ENCODE measurements at regions of chr21 and their contacts with region 1.

Region 1: DNA sequence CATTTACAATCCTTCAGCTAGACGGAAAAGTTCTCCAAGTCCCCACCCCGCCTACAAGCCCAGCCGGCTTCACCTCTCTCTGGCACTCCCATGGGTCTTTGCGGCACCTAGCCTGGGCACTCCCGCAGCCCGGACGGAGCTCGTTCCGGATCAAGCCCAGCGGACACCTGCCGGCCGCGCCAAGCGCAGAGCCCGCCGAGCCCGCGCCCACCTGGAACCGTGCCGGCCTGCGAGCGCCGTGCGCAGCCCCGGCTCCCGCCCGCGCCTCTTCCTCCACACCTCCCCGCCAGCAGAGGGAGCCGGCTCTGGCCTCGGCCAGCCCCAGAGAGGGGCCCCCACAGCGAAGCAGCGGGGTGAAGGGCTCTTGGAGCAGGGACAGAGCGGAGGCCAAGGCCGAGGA is 50.0 kb upstream of the KRTAP19-8 start:
- DNase-seq: no peak
- ATAC-seq: no peak

Region 2: GRCh38 chr21:30044445-30045064 is 1043.8 kb before region 1 on chr21:
- intact Hi-C with region 1: loop called (anchors 10 kb)
- DNase-seq: no peak
- ATAC-seq: no peak

Region 3: DNA sequence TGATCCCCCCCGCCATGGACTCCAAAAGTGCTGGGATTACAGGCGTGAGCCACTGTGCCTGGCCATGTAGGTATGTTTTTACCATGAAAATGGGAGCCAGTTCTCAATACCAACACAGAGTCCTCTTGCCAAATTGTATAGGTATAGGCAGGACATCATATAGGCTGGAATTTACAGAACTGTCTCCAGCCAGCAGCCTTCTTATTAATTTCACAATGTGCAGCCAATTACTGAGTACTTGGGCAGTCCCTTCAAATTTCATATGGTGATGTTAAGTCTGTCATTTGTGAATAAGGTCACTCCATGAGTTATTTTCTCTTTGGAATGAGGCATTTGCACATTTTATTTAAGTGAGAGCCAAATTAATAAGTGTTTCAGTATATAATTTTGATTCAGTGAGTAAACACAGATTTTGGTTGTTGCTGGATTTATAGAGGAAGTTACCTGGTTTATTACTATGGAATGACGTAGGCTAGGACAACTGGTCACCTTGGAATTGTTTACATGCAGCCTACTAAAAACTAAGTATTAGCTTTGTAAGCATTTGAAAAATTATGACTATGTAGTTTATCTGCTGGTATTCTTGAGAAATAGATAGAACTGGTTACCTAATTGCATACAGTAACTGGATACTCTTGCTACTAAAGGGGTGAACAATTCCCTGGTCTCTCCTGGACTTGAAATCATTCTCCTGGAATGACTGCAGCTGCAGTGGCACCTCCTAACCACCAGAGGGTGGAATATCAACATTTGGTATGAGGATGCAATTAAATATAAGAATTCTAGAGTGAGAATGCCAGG is 747.7 kb before region 1 on chr21:
- intact Hi-C with region 1: loop called (anchors 10 kb)
- DNase-seq: peak; percentile 35
- ATAC-seq: no peak

Region 4: GRCh38 chr21:30444204-30444603 is 644.1 kb before region 1 on chr21:
- intact Hi-C with region 1: loop called (anchors 5 kb)
- DNase-seq: no peak
- ATAC-seq: peak; percentile 78

Region 5: GRCh38 chr21:30831194-30831765 is 257.0 kb before region 1 on chr21:
- intact Hi-C with region 1: loop called (anchors 5 kb)
- DNase-seq: no peak
- ATAC-seq: no peak